ENCODE measurements at regions of chr9 and their contacts with region 1.

Region 1: DNA sequence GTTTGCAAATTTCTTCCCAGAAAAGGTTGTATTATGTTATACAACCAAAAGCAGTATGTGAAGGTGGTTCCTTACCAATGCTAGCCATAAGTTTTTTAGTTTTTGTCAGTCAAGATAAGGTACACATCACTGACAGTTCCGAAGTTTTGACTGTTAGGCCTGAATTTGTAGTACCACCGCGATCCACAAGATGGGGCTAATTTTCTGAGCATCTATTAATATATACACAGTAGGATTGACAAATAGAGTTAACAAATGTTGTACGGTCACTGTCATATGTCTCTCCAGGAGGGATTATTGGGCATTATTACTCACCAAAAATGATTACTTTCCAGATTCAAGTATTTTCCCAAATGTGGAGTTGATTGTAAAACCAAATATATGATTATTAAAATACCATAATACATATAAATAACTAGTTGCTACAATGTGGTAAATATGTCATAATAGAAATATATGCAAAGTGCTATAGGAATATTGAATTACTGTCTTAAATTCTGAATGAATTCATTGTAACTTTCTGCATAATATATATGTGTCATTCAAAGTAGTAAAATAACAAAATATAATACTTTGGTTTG is 28.4 kb upstream of the LRRC19 start:
- DNase-seq: no peak
- H3K4me3 ChIP-seq: no peak overlapping the region
- H3K27ac ChIP-seq: no peak overlapping the region
- H3K4me1 ChIP-seq: no peaks in the 10 kb centered on the region
- H3K27me3 ChIP-seq: no peaks in the 10 kb centered on the region
- CTCF ChIP-seq: peak; percentile 80 to 88 (median 85)
- EP300 ChIP-seq: no peak
- POLR2A ChIP-seq: no peak

Region 2: DNA sequence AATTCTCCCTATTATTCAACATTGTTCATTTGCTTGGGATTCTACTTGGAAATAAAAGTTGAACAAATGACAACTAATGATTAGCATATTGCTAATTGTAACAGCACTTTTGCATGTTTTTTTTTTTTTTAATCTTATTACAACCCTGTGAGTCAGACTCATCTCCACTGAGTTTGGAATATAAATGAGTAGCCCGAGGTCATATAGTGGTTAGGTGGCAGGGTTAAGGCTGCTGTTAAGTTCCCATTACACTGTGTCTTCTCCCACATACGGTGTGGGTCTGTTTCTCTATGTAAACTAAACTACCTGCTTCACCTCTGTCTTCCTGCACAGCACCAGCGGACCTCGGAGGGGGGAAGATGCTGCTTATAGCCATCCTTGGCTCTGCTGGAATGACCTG is 170.7 kb after region 1 on chr9:
- intact Hi-C with region 1: loop called (anchors 10 kb)
- DNase-seq: no peak
- H3K4me3 ChIP-seq: no peak overlapping the region
- H3K27ac ChIP-seq: no peak overlapping the region
- H3K4me1 ChIP-seq: peaks cover 0 to 20% (median 14%) of the 10 kb centered on the region in 4 donors
- H3K27me3 ChIP-seq: no peaks in the 10 kb centered on the region
- CTCF ChIP-seq: no peak
- EP300 ChIP-seq: no peak
- POLR2A ChIP-seq: no peak

Region 3: DNA sequence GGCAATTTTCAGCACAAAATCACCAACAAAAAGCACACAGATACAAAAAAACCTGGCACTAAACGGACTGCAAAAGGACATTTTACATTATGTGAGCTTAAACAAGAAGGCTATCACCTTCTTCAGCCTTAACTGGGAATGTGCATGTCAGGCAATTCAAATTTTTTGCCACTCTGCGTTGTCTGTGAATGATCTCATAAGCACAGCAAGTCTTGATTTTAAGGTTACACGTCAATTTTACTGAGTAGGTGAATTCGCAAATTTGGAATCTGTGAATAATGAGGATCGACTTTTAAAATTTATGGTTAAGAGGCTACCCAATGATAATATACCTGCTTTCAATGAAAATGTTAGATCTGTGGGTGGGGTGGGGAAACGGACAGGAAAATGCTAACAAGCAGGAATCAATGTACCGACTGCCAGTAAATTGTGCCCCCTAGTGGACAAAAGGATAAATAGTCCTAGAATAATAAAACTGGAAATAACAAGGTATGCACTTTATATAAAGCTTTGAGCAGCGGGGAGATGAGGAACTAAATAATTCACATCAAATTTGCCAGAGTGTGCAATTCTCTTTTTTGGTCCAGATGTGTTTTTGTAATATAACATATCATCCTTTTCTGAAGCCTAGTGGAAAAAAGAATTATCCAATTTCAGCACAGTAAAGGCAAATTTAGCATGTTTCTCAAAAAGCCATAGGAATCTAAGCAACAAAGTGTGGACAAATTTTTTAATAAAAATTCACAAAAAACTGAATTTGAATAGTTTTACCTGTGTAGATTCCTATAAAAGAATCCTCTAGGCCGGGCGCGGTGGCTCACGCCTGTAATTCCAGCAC is 242.5 kb after region 1 on chr9:
- intact Hi-C with region 1: loop called (anchors 2 kb)
- DNase-seq: no peak
- H3K4me3 ChIP-seq: peak overlapping the region in 3 of 4 donors; percentile 4 to 41 (median 16)
- H3K27ac ChIP-seq: no peak overlapping the region
- H3K4me1 ChIP-seq: peaks cover 0 to 15% (median 7%) of the 10 kb centered on the region in 4 donors
- H3K27me3 ChIP-seq: no peaks in the 10 kb centered on the region
- CTCF ChIP-seq: peak; percentile 72 to 84 (median 77)
- EP300 ChIP-seq: no peak
- POLR2A ChIP-seq: no peak